SK-N-SH (cell line): ENCODE measurements at regions of chr5 and their contacts with region 1.

Region 1: GRCh38 chr5:1479581-1480188 is 34.4 kb upstream of the SLC6A3 start:
- DNase-seq: peak; percentile 87
- H3K4me3 ChIP-seq: no peak overlapping the region; a peak in 1 of 4 replicates
- H3K27ac ChIP-seq: no peak overlapping the region
- H3K4me1 ChIP-seq: no peaks in the 10 kb centered on the region
- H3K27me3 ChIP-seq: no peaks in the 10 kb centered on the region
- CTCF ChIP-seq: peak; percentile 71
- EP300 ChIP-seq: no peak
- RAD21 ChIP-seq: peak; percentile 39

Region 2: GRCh38 chr5:1492757-1493156 is 13.1 kb after region 1 on chr5:
- CTCF ChIA-PET with region 1: interaction called, 10 read pairs
- POLR2A ChIA-PET with region 1: no interaction called
- DNase-seq: no peak
- H3K4me3 ChIP-seq: no peak overlapping the region
- H3K27ac ChIP-seq: no peak overlapping the region
- H3K4me1 ChIP-seq: peaks cover 3 to 5% of the 10 kb centered on the region in 2 experiments; a peak in 2 of 4 replicates
- H3K27me3 ChIP-seq: no peaks in the 10 kb centered on the region
- CTCF ChIP-seq: no peak
- EP300 ChIP-seq: no peak
- RAD21 ChIP-seq: no peak